ENCODE measurements at regions of chr2 and their contacts with region 1.

Region 1: DNA sequence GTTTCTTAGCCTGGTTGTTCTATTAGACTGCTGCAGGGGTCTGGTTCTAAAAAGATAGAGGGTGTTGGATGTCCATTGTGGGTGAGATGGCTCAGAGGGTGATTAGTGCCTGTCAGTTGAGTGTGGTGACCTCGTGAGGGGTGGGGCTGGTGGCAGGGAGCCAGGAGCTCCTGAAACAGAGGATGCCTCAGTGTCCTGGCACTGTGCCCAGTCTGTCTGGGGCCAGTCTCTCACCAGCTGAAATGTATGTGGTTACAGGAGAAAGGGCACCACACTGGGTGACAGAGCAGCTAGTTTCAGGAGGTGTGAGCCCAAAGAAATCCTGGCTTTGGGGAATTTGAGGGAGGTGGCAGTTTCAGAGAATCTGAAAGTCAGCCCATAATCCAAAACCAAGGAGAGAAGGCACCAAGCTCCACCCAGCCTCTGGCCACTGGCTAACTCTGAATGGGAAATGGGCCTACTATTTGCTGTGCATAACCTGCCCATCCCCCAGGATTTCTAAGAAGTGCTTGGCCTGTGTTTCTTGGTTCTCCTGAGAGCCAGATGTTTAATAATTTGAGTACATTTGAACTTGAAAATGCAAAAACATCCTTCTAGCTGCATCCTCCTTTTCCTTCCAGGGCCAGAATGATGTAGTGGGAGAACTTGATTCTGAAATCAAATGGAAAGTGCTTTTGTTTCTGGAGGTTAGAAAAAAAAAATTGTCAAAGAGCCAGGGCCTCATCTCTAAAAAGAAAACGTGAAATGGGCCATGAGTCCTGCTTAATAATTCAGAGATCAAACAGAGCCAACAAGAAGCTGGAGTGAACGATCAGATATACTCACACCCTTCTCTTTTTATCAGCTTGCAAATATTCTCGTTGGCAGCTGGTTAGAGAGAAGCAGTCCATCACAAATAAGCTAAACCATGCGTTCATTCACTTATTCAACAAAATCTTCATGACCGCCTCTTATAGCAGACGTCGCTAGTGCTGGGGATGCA is 92.3 kb downstream of the B3GNT2 start:
- DNase-seq: peak; percentile 62 to 84 (median 78)
- H3K4me3 ChIP-seq: no peak overlapping the region
- H3K27ac ChIP-seq: no peak overlapping the region
- H3K4me1 ChIP-seq: peaks cover 10 to 14% of the 10 kb centered on the region in 2 donors
- H3K27me3 ChIP-seq: no peaks in the 10 kb centered on the region
- CTCF ChIP-seq: no peak
- POLR2A ChIP-seq: no peak

Region 2: GRCh38 chr2:62195421-62196277 is 92.5 kb before region 1 on chr2 and contains the start of gene B3GNT2:
- intact Hi-C with region 1: loop called in 1 of 2 experiments (anchors 10 kb)
- DNase-seq: peak; percentile 75 to 87 (median 82)
- H3K4me3 ChIP-seq: peak within 1 kb of the TSS; percentile 88 to 99 (median 97)
- H3K27ac ChIP-seq: peak within 1 kb of the TSS; percentile 86 to 98 (median 93)
- H3K4me1 ChIP-seq: peaks cover 10 to 36% of the 10 kb centered on the region in 2 donors
- H3K27me3 ChIP-seq: no peaks in the 10 kb centered on the region
- CTCF ChIP-seq: no peak
- POLR2A ChIP-seq: peak; percentile 69 to 90
- total RNA-seq, gene B3GNT2: 13.0 to 40.0 (median 18.4) TPM

Measured in adrenal gland (tissue), 19 donors.